Natural killer cell (primary cell): ENCODE measurements at regions of chr16 and their contacts with region 1.

Region 1: GRCh38 chr16:83215406-83216001 is 588.7 kb downstream of the CDH13 start:
- DNase-seq: peak; percentile 60 to 64
- ATAC-seq: peak; percentile 52 to 76 (median 70)
- H3K4me3 ChIP-seq: no peak overlapping the region
- H3K4me3 Mint-ChIP-seq: no peak overlapping the region
- H3K27ac ChIP-seq: no peak overlapping the region
- H3K27ac Mint-ChIP-seq: no peak overlapping the region
- H3K4me1 ChIP-seq: peaks cover 10% of the 10 kb centered on the region
- H3K4me1 Mint-ChIP-seq: peaks cover 15 to 23% of the 10 kb centered on the region in 2 donors
- H3K27me3 ChIP-seq: no peaks in the 10 kb centered on the region
- H3K27me3 Mint-ChIP-seq: peaks cover 0 to 4% of the 10 kb centered on the region in 2 donors
- CTCF ChIP-seq: peak; percentile 91

Region 2: GRCh38 chr16:82263521-82264143 is 951.9 kb before region 1 on chr16:
- intact Hi-C with region 1: loop called (anchors 1 kb)
- DNase-seq: peak; percentile 34 to 82
- ATAC-seq: peak; percentile 66 to 91 (median 79)
- H3K4me3 ChIP-seq: no peak overlapping the region
- H3K4me3 Mint-ChIP-seq: no peak overlapping the region
- H3K27ac ChIP-seq: no peak overlapping the region
- H3K27ac Mint-ChIP-seq: no peak overlapping the region
- H3K4me1 ChIP-seq: no peaks in the 10 kb centered on the region
- H3K4me1 Mint-ChIP-seq: no peaks in the 10 kb centered on the region
- H3K27me3 ChIP-seq: no peaks in the 10 kb centered on the region
- H3K27me3 Mint-ChIP-seq: peaks cover 16 to 23% of the 10 kb centered on the region in 2 donors
- CTCF ChIP-seq: peak; percentile 90

Region 3: GRCh38 chr16:82368041-82368440 is 847.5 kb before region 1 on chr16:
- intact Hi-C with region 1: loop called (anchors 10 kb)
- DNase-seq: peak in 1 of 2 donors; percentile 57
- ATAC-seq: no peak
- H3K4me3 ChIP-seq: no peak overlapping the region
- H3K4me3 Mint-ChIP-seq: no peak overlapping the region
- H3K27ac ChIP-seq: no peak overlapping the region
- H3K27ac Mint-ChIP-seq: no peak overlapping the region
- H3K4me1 ChIP-seq: no peaks in the 10 kb centered on the region
- H3K4me1 Mint-ChIP-seq: no peaks in the 10 kb centered on the region
- H3K27me3 ChIP-seq: no peaks in the 10 kb centered on the region
- H3K27me3 Mint-ChIP-seq: peaks cover 6 to 12% of the 10 kb centered on the region in 2 donors
- CTCF ChIP-seq: no peak

Region 4: GRCh38 chr16:82630688-82631087 is 584.8 kb before region 1 on chr16:
- intact Hi-C with region 1: loop called (anchors 1 kb)
- DNase-seq: peak in 1 of 2 donors; percentile 38
- ATAC-seq: no peak
- H3K4me3 ChIP-seq: no peak overlapping the region
- H3K4me3 Mint-ChIP-seq: no peak overlapping the region
- H3K27ac ChIP-seq: no peak overlapping the region
- H3K27ac Mint-ChIP-seq: no peak overlapping the region
- H3K4me1 ChIP-seq: peaks cover 5% of the 10 kb centered on the region
- H3K4me1 Mint-ChIP-seq: peaks cover 0 to 15% of the 10 kb centered on the region in 2 donors
- H3K27me3 ChIP-seq: peaks cover 9% of the 10 kb centered on the region
- H3K27me3 Mint-ChIP-seq: peaks cover 47 to 54% of the 10 kb centered on the region in 2 donors
- CTCF ChIP-seq: no peak

Region 5: GRCh38 chr16:82748026-82748425 is 467.5 kb before region 1 on chr16:
- intact Hi-C with region 1: loop called (anchors 2 kb)
- DNase-seq: peak in 1 of 2 donors; percentile 5
- ATAC-seq: peak in 1 of 3 donors; percentile 34
- H3K4me3 ChIP-seq: no peak overlapping the region
- H3K4me3 Mint-ChIP-seq: no peak overlapping the region
- H3K27ac ChIP-seq: no peak overlapping the region
- H3K27ac Mint-ChIP-seq: no peak overlapping the region
- H3K4me1 ChIP-seq: no peaks in the 10 kb centered on the region
- H3K4me1 Mint-ChIP-seq: peaks cover 24% of the 10 kb centered on the region in 2 donors
- H3K27me3 ChIP-seq: no peaks in the 10 kb centered on the region
- H3K27me3 Mint-ChIP-seq: peaks cover 16 to 43% of the 10 kb centered on the region in 2 donors
- CTCF ChIP-seq: no peak

Region 6: GRCh38 chr16:83113317-83113716 is 102.2 kb before region 1 on chr16:
- intact Hi-C with region 1: loop called (anchors 2 kb)
- DNase-seq: peak in 1 of 2 donors; percentile 24
- ATAC-seq: peak in 2 of 3 donors; percentile 47 to 53
- H3K4me3 ChIP-seq: no peak overlapping the region
- H3K4me3 Mint-ChIP-seq: no peak overlapping the region
- H3K27ac ChIP-seq: no peak overlapping the region
- H3K27ac Mint-ChIP-seq: no peak overlapping the region
- H3K4me1 ChIP-seq: no peaks in the 10 kb centered on the region
- H3K4me1 Mint-ChIP-seq: peaks cover 16 to 23% of the 10 kb centered on the region in 2 donors
- H3K27me3 ChIP-seq: no peaks in the 10 kb centered on the region
- H3K27me3 Mint-ChIP-seq: peaks cover 27 to 35% of the 10 kb centered on the region in 2 donors
- CTCF ChIP-seq: peak; percentile 44

Region 7: DNA sequence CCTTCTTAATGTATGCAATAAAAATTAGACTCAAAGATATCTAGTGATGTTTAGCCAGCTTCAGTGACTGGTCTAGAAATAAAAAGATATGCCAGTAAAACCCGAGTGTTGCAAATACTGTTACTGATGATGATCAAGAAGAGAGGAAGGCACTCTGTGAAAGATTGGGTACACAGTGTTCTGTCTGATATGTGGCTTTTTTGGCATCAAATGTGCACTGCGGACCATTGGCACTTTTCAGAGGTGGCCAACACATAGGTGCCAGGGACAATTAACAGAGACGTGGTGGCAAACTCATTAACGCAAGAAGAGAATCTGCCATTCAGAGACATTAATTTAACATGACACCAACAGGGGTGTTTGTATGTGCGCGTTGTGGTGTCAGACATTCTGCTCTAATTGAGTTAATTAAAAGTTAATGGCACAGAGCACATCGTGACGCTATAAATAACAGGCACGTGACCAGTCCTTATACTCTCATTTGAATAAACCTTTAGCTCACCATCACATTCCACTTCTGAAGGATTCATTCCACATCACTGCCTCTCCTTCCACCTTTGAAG is 42.9 kb after region 1 on chr16:
- intact Hi-C with region 1: no loop called
- DNase-seq: no peak
- ATAC-seq: no peak
- H3K4me3 ChIP-seq: no peak overlapping the region
- H3K4me3 Mint-ChIP-seq: no peak overlapping the region
- H3K27ac ChIP-seq: no peak overlapping the region
- H3K27ac Mint-ChIP-seq: no peak overlapping the region
- H3K4me1 ChIP-seq: no peaks in the 10 kb centered on the region
- H3K4me1 Mint-ChIP-seq: no peaks in the 10 kb centered on the region
- H3K27me3 ChIP-seq: no peaks in the 10 kb centered on the region
- H3K27me3 Mint-ChIP-seq: peaks cover 5 to 6% of the 10 kb centered on the region in 2 donors
- CTCF ChIP-seq: no peak

Region 8: GRCh38 chr16:83285921-83286320 is 70.4 kb after region 1 on chr16:
- intact Hi-C with region 1: no loop called
- DNase-seq: no peak
- ATAC-seq: no peak
- H3K4me3 ChIP-seq: no peak overlapping the region
- H3K4me3 Mint-ChIP-seq: no peak overlapping the region
- H3K27ac ChIP-seq: no peak overlapping the region
- H3K27ac Mint-ChIP-seq: no peak overlapping the region
- H3K4me1 ChIP-seq: no peaks in the 10 kb centered on the region
- H3K4me1 Mint-ChIP-seq: no peaks in the 10 kb centered on the region
- H3K27me3 ChIP-seq: no peaks in the 10 kb centered on the region
- H3K27me3 Mint-ChIP-seq: peaks cover 3 to 14% of the 10 kb centered on the region in 2 donors
- CTCF ChIP-seq: no peak

Region 9: DNA sequence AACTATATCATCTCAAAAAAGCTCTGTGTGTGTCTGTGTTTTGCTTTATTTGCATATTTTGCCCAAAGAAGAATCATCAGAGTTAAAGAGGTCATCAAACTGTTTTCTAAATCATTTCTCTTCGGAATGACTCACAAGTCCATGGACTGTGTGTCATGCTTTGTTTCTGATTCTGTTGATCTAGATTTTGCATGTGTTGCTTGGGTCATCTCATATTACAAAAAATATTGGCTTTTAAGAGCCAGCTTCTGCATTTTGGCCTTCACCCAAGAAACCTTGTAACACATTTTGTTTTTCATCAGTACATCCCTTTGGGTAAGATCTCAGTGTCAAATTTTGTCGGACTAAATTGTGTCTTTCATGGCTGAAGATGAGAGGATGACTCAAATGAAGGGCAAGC is 121.1 kb after region 1 on chr16:
- intact Hi-C with region 1: no loop called
- DNase-seq: no peak
- ATAC-seq: no peak
- H3K4me3 ChIP-seq: no peak overlapping the region
- H3K4me3 Mint-ChIP-seq: no peak overlapping the region
- H3K27ac ChIP-seq: no peak overlapping the region
- H3K27ac Mint-ChIP-seq: no peak overlapping the region
- H3K4me1 ChIP-seq: no peaks in the 10 kb centered on the region
- H3K4me1 Mint-ChIP-seq: no peaks in the 10 kb centered on the region
- H3K27me3 ChIP-seq: no peaks in the 10 kb centered on the region
- H3K27me3 Mint-ChIP-seq: peaks cover 7 to 10% of the 10 kb centered on the region in 2 donors
- CTCF ChIP-seq: no peak